ENCODE measurements at regions of chr17 and their contacts with region 1.

Region 1: GRCh38 chr17:8118769-8119580 is 661 bp upstream of the ALOXE3 start:
- DNase-seq: peak; percentile 85
- H3K4me3 ChIP-seq: peak overlapping the region; percentile 65
- H3K27ac ChIP-seq: no peak overlapping the region
- H3K27me3 ChIP-seq: peaks cover 11% of the 10 kb centered on the region
- CTCF ChIP-seq: peak; percentile 94

Region 2: DNA sequence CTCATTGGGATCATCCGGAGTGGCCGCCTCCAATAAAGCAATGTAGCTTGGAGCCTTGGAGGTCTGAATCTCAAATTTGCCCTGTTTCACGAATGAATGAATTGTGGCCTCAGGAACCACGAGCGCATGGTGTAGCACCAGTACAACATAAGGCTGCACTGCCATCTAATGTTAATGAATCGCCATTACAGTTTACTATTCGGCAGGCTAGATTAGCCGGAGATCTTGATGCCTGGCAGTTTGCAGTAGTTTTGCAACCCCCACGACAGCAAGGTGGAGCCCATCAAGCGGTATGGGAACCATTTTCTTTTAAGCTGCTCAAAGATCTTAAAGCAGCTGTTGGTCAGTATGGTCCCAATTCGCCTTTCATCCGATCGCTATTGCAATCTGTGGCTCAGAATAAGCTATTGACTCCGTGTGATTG is 61.3 kb before region 1 on chr17:
- in situ Hi-C with region 1: loop called (anchors 10 kb)
- DNase-seq: peak; percentile 77
- H3K4me3 ChIP-seq: no peak overlapping the region
- H3K27ac ChIP-seq: no peak overlapping the region
- H3K27me3 ChIP-seq: peaks cover 26% of the 10 kb centered on the region
- CTCF ChIP-seq: peak; percentile 79

Region 3: GRCh38 chr17:8337802-8338752 is 219.1 kb after region 1 on chr17:
- in situ Hi-C with region 1: no loop called
- DNase-seq: no peak
- H3K4me3 ChIP-seq: no peak overlapping the region
- H3K27ac ChIP-seq: no peak overlapping the region
- H3K27me3 ChIP-seq: no peaks in the 10 kb centered on the region
- CTCF ChIP-seq: no peak